WTC11 (cell line): ENCODE measurements at regions of chr7 and their contacts with region 1.

Region 1: DNA sequence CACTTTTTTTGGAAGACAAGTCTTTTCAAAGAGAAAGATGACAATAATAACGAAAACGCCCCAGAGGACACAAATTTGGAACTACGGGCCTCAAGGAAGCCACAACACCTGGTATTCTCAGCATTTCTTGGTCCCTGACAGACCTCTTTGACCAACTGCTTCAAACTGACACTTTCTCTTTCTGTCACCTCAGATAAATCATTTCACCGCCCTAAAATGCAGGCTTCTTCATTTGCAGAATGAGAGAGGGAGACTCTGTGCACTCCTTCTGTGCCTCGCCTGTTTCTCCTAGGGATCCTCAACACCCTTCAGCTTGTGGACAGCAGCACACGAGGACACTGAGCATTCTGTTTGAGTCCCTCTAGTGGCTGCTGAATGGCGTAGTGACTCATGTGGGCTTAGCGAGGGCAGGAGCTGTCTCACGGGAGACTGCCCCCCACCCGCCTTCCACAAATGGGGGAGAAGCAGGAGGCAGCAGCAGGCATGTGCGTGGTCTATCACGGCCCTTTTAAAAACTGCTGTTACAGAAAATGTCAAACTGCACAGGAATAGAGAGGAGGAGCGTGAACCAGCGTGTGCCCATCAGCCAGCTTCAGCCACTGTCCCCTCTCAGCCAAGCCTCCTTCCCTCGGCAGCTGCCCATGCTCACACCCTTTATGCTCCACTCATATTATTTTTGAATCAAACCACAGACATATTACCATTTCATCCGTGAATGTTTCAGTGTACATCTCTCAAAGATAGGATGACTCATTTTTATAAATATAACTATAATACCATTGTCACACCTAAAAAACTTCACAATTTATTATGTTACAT is 41.4 kb downstream of the GSDME start:
- DNase-seq: peak; percentile 53
- ATAC-seq: peak; percentile 89
- H3K4me3 Mint-ChIP-seq: no peak overlapping the region
- H3K27ac Mint-ChIP-seq: no peak overlapping the region
- H3K4me1 Mint-ChIP-seq: peaks cover 7% of the 10 kb centered on the region
- H3K27me3 Mint-ChIP-seq: no peaks in the 10 kb centered on the region; the same call in 1 of the 2 replicates
- CTCF ChIP-seq: peak; percentile 22; the same call in 1 of the 2 replicates

Region 2: DNA sequence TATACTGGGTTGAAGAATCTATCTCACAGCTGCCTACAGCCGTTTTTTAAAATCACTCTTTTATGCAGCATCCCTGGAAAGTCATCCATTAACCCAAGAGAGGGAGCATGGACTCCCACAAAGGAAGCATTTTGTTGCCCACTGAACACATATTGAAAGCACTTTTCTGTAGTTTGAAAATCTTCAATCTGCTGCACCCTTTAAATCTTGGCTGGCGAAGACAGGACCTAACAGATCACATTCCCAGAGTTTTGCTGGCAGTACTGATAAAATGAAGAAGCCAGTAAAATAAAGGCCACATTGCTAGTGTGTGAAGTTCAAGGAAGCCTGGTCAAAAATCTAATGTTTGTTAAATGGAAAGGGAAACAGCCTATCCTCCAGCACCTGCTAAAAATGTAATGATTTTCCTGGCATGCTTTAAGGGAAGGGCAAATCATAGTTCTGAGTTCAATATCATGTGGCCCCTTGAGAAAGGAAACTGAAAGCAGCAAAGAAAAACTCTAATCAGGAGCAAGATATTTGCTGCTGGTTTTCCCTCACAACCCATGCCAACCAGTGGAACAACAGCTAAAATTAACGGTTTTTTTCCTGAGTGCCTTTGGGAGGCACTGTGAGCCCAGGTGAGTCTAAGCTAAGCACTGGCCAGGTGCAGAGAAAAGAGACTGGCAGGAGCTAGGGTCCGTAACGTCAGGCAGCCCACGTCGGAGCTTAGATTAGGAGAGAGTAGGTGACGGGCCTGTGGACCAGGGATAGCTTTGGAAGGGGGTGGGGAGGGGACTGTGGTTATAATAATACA is 240.5 kb before region 1 on chr7:
- CTCF ChIA-PET with region 1: interaction called, 10 read pairs
- POLR2A ChIA-PET with region 1: no interaction called
- DNase-seq: peak; percentile 43
- ATAC-seq: peak; percentile 82
- H3K4me3 Mint-ChIP-seq: no peak overlapping the region
- H3K27ac Mint-ChIP-seq: no peak overlapping the region
- H3K4me1 Mint-ChIP-seq: peaks cover 37% of the 10 kb centered on the region
- H3K27me3 Mint-ChIP-seq: peaks cover 12% of the 10 kb centered on the region
- CTCF ChIP-seq: no peak

Region 3: DNA sequence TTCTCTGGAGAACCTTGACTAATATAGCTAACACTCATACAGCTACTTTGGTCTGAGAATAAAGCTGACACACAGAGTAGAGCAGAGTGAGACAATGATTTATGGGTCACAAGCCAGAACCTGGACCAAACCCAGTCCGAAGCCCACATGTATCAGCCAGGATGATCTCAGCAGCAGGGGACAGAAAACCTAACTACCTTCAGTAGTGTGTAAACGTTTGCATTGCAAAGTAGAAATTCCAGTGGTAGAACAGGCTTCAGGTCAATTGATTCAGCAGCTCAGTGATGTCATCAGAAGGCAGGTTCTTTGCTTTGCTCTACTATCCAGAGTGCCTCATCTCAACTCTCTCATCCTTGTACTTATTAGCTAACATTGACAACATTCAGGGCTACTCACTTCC is 205.1 kb before region 1 on chr7:
- CTCF ChIA-PET with region 1: no interaction called
- POLR2A ChIA-PET with region 1: no interaction called
- DNase-seq: no peak
- ATAC-seq: no peak
- H3K4me3 Mint-ChIP-seq: no peak overlapping the region
- H3K27ac Mint-ChIP-seq: no peak overlapping the region
- H3K4me1 Mint-ChIP-seq: peaks cover 16% of the 10 kb centered on the region
- H3K27me3 Mint-ChIP-seq: peaks cover 4% of the 10 kb centered on the region
- CTCF ChIP-seq: no peak

Region 4: DNA sequence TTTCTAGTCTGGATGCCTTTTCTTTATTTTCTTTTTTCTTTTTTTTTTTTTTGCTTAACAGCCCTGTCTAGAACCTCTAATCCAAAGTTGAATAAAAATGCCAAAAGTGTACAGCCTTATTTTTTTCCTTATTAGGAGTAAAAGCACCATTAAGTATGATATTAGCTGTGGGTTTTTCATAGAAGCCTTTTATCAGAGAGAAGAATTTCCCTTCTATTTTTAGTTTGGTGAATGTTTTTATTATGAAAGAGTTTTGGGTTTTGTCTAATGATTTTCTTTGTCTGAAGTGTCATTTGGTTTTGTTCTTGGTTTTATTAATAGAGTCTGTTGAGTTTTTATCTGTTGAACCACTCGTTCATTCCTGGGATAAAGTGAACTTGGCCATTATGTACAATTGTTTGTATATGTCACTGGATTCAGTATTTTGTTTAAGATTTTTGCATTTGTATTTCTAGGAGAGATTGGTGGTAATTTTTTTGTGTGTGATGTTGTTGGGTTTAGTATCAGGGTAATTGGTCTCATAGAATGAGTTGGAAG is 93.2 kb before region 1 on chr7:
- CTCF ChIA-PET with region 1: no interaction called
- POLR2A ChIA-PET with region 1: no interaction called
- DNase-seq: no peak
- ATAC-seq: no peak
- H3K4me3 Mint-ChIP-seq: no peak overlapping the region
- H3K27ac Mint-ChIP-seq: no peak overlapping the region
- H3K4me1 Mint-ChIP-seq: peaks cover 38% of the 10 kb centered on the region
- H3K27me3 Mint-ChIP-seq: no peaks in the 10 kb centered on the region
- CTCF ChIP-seq: no peak

Region 5: GRCh38 chr7:24701261-24702235 is 14.3 kb before region 1 on chr7:
- CTCF ChIA-PET with region 1: interaction called, 43 read pairs
- POLR2A ChIA-PET with region 1: no interaction called
- DNase-seq: no peak
- ATAC-seq: no peak
- H3K4me3 Mint-ChIP-seq: no peak overlapping the region
- H3K27ac Mint-ChIP-seq: 0 out of 2 replicates have a peak overlapping the region, but pooled peaks have one; percentile 2
- H3K4me1 Mint-ChIP-seq: peaks cover 10% of the 10 kb centered on the region
- H3K27me3 Mint-ChIP-seq: no peaks in the 10 kb centered on the region
- CTCF ChIP-seq: no peak

Region 6: DNA sequence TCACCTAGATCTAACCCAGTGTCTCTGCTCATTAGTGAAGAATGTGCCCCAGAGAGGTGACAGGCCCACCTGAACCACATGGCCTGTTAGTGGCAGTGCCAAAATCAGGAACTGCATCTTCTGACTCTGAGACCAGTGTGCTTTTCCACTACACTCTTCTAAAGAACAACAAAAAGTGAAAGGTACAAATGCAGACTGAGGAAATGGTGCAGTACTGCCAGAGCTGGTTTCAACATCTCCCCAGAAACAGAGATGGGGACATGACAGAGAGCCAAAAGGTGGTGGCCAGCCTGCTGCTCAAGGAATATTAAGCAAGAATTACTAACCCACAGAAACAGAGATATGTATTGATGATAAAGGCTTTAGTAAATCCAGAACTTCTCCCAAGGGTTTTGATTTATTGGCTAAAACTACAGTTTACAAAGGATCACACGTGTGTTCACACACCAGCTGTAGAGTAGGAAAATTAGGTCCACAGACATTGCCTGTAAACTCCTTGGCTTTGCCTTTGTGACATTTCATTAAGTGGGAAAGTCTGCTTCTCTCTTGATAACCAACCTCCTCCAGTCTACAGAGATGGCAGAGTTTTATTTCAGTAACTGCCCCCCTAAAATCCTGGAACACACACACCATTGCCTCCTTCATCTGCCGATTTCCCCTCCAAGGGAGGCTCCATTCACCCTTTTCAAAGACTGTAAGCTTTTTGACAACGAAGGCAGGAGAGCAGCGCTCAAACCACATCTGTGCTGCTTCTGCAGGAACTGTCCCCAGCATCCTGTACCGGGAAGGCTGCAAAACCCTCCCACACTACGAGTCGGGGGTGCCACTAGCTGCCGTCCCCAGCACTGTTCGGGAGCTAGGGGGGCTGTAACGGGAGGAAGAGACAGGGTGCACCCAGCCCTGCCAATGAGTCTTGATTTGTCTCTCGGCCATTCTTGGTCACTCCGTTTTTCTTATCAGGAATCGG is 11.6 kb after region 1 on chr7:
- CTCF ChIA-PET with region 1: interaction called, 11 read pairs
- POLR2A ChIA-PET with region 1: interaction called, 4 read pairs
- DNase-seq: no peak
- ATAC-seq: no peak
- H3K4me3 Mint-ChIP-seq: no peak overlapping the region
- H3K27ac Mint-ChIP-seq: no peak overlapping the region
- H3K4me1 Mint-ChIP-seq: peaks cover 49% of the 10 kb centered on the region
- H3K27me3 Mint-ChIP-seq: peaks cover 34% of the 10 kb centered on the region
- CTCF ChIP-seq: no peak

Region 7: DNA sequence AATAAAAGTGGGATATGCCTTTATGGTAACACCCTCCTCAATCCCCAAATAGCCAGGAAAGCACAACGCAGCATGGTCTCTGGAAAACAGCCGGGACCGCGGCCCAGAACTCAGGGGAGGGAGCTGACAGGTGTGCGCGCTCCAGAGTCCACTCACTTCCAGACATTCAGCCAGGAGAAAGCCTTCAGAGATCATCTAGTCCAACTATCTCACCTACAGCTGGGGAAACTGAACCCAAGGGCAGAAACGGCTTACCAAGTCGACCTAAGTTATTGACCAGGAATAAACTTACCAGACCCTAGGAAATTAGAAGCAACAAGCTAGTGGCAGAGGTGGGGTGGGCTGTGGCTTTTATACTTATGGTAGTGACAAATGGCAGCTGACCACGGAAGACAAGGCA is 25.0 kb after region 1 on chr7:
- CTCF ChIA-PET with region 1: no interaction called
- POLR2A ChIA-PET with region 1: no interaction called
- DNase-seq: no peak
- ATAC-seq: no peak
- H3K4me3 Mint-ChIP-seq: no peak overlapping the region
- H3K27ac Mint-ChIP-seq: no peak overlapping the region
- H3K4me1 Mint-ChIP-seq: peaks cover 3% of the 10 kb centered on the region; the same call in 1 of the 2 replicates
- H3K27me3 Mint-ChIP-seq: no peaks in the 10 kb centered on the region
- CTCF ChIP-seq: no peak